ENCODE measurements at regions of chr12 and their contacts with region 1.

Region 1: DNA sequence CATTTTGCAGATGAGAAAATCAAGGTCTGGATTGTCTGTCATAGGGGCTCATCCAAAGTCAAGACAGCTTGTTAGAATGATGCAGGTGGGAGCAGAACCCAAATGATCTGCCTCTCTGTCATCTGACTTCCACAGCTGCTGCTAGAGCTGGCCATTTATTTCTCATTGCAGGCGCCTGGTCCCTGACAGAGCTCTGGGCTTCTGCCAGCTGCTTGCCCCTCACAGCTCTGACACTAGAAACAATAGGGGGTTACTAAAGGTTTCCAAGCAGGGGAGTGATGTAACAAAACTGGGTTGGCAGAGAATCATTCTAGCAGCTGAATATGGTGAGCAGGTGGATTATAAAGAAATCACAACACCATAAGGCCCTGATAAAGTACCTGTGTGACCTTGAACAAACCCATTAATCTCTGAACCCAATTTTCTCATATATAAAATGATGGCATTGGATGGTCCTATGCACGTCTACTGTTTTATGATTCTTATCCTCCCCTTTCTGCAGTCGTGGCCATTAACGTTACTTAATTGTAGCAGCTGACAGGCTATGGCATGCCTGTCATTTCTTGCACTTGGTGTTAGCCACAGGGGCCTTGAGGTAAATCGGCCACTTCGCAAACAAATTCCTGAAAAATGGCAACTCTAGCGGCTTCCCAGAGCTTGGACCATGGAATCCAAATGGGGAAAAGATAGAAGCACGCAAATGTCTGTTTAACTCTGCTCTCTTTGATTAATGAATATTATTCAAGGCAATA is 134.6 kb downstream of the RMST start:
- DNase-seq: no peak
- ATAC-seq: no peak
- H3K4me3 ChIP-seq: no peak overlapping the region
- H3K27ac ChIP-seq: no peak overlapping the region
- H3K4me1 ChIP-seq: peaks cover 25% of the 10 kb centered on the region
- H3K27me3 ChIP-seq: no peaks in the 10 kb centered on the region
- CTCF ChIP-seq: no peak

Region 2: DNA sequence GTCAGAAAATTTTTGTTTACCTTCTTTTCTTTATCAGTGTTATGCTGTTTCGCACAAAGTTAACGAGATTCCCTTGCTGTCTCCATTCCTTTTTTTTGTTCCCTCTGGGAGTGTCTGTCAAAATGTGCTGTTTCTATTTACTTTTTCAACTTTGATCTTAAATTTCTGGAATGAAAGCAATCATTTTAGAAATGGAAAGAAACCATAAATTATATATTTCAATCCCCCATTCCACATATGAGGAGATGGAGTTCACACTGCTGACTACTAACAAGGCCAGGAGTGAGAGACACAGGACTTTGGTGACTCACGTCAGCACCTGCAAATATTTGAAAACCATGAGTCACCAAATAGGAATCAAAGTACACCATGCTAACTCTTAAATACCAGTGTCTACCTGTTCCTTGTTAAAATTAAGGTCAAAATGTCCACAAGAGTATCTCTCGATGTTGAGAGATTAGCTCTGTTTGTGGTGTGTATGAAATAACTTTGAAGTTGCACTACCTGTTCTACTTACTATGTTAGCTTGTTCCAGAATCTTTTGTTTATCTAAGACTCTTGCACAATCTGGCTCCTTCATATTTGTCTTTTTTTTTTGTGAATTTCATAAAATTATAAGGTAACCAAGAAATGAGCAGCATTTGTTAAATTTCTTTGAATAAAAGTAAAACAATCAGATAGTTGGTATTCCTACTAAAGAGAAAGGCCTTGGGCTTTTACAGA is 28.6 kb before region 1 on chr12:
- CTCF ChIA-PET with region 1: no interaction called
- POLR2A ChIA-PET with region 1: no interaction called
- intact Hi-C with region 1: loop called (anchors 1 kb)
- DNase-seq: peak; percentile 96
- ATAC-seq: peak; percentile 94
- H3K4me3 ChIP-seq: peak overlapping the region; percentile 49
- H3K27ac ChIP-seq: peak overlapping the region; percentile 89
- H3K4me1 ChIP-seq: peaks cover 51% of the 10 kb centered on the region
- H3K27me3 ChIP-seq: no peaks in the 10 kb centered on the region
- CTCF ChIP-seq: no peak

Region 3: GRCh38 chr12:97575403-97576193 is 21.6 kb before region 1 on chr12:
- CTCF ChIA-PET with region 1: no interaction called
- POLR2A ChIA-PET with region 1: interaction called, 3 read pairs
- intact Hi-C with region 1: loop called (anchors 2 kb)
- DNase-seq: peak; percentile 80
- ATAC-seq: peak; percentile 88
- H3K4me3 ChIP-seq: no peak overlapping the region
- H3K27ac ChIP-seq: no peak overlapping the region
- H3K4me1 ChIP-seq: peaks cover 42% of the 10 kb centered on the region
- H3K27me3 ChIP-seq: no peaks in the 10 kb centered on the region
- CTCF ChIP-seq: no peak

Region 4: GRCh38 chr12:97616946-97617345 is 19.7 kb after region 1 on chr12:
- CTCF ChIA-PET with region 1: no interaction called
- POLR2A ChIA-PET with region 1: interaction called, 11 read pairs
- intact Hi-C with region 1: no loop called
- DNase-seq: no peak
- ATAC-seq: no peak
- H3K4me3 ChIP-seq: no peak overlapping the region
- H3K27ac ChIP-seq: no peak overlapping the region
- H3K4me1 ChIP-seq: peaks cover 10% of the 10 kb centered on the region
- H3K27me3 ChIP-seq: no peaks in the 10 kb centered on the region
- CTCF ChIP-seq: no peak

Measured in PC-3 (cell line).